ENCODE measurements at regions of chr19 and their contacts with region 1.

Region 1: GRCh38 chr19:14363183-14364097 is 17.8 kb upstream of the ADGRE5 start:
- DNase-seq: peak; percentile 78 to 79
- ATAC-seq: peak; percentile 40 to 67 (median 52)
- H3K4me3 ChIP-seq: peak overlapping the region; percentile 39
- H3K27ac ChIP-seq: peak overlapping the region; percentile 50
- H3K4me1 ChIP-seq: no peaks in the 10 kb centered on the region
- H3K27me3 ChIP-seq: no peaks in the 10 kb centered on the region
- CTCF ChIP-seq: no peak

Region 2: GRCh38 chr19:14318873-14319272 is 44.6 kb before region 1 on chr19:
- intact Hi-C with region 1: no loop called
- DNase-seq: peak in 1 of 2 donors; percentile 51
- ATAC-seq: no peak
- H3K4me3 ChIP-seq: no peak overlapping the region
- H3K27ac ChIP-seq: no peak overlapping the region
- H3K4me1 ChIP-seq: no peaks in the 10 kb centered on the region
- H3K27me3 ChIP-seq: no peaks in the 10 kb centered on the region
- CTCF ChIP-seq: no peak

Region 3: DNA sequence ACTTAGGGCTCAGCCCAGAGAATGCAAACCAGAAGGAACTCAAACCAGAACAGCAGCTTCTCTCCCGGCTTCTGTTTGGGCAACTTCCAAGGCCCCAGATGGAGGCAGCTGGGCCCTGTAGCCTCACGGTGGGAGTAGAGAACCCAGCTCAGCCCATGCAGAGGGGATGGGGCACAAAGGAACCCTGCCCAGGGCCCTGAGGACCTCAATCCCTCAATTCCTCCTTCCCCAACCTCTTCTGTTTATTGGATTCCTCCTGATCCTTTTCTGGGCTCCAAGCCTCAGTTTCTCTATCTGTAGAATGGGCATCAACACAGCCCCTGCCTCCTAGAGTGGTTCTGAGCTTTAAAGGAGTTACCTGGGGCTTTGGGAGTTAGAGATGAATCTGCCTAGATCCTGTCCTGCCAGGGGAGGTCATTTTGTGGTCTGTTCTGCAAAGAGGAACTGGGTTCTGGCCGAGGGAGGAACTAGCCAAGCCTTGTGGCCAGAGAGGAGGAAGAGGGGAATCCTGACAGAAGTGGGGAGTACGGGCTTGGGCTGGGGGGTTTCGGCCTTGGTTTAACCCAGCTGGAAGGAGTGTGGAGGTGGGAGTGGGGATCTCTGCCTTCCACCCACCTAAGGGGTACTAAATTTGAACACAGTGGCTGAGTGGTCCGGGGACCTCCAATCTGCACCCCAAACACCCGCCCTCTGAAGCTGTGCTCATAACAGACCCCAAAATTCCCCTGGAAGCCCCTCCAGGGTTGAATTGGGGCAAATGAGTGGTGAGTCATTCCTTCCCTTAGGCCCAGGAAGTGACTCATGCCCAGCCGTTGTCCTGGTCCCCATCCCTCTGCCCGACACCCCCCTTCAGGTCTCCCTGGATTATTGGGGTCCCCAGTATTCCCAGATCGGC is 20.5 kb after region 1 on chr19:
- intact Hi-C with region 1: no loop called
- DNase-seq: peak in 1 of 2 donors; percentile 68
- ATAC-seq: peak in 3 of 4 donors; percentile 31 to 52 (median 33)
- H3K4me3 ChIP-seq: peak overlapping the region; percentile 85
- H3K27ac ChIP-seq: peak overlapping the region; percentile 95
- H3K4me1 ChIP-seq: peaks cover 33% of the 10 kb centered on the region
- H3K27me3 ChIP-seq: no peaks in the 10 kb centered on the region
- CTCF ChIP-seq: no peak

Region 4: GRCh38 chr19:14395710-14396336 is 32.4 kb after region 1 on chr19:
- intact Hi-C with region 1: no loop called
- DNase-seq: no peak
- ATAC-seq: peak in 1 of 4 donors; percentile 14
- H3K4me3 ChIP-seq: no peak overlapping the region
- H3K27ac ChIP-seq: no peak overlapping the region
- H3K4me1 ChIP-seq: no peaks in the 10 kb centered on the region
- H3K27me3 ChIP-seq: no peaks in the 10 kb centered on the region
- CTCF ChIP-seq: no peak

Region 5: DNA sequence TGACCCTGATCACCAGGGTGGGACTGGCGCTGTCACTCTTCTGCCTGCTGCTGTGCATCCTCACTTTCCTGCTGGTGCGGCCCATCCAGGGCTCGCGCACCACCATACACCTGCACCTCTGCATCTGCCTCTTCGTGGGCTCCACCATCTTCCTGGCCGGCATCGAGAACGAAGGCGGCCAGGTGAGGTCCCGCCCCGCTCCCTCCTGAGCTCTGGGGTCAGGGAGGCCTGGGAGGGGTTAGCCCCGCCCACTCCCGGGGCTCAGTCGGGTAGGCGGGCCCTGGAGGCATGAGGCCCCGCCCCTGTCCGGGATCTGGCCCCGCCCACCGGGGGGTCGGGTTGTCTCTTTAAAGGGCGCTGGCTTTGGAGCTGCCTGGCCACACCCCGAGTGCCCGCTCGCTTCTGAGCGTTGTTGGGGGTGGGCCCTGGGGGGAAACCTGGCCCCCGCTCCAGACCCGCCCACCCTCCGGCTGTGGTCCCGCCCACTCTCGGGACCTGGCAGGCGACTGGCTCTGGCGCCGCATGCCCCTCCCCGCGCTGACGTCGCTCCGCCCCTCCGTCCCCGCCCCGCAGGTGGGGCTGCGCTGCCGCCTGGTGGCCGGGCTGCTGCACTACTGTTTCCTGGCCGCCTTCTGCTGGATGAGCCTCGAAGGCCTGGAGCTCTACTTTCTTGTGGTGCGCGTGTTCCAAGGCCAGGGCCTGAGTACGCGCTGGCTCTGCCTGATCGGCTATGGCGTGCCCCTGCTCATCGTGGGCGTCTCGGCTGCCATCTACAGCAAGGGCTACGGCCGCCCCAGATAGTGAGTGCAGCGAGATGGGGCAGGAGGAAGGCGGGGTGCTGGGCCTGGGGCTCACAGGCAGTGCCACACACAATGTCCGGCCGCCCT is 42.6 kb after region 1 on chr19:
- intact Hi-C with region 1: loop called in 1 of 2 experiments (anchors 5 kb)
- DNase-seq: peak; percentile 88 to 94
- ATAC-seq: peak; percentile 86 to 92 (median 90)
- H3K4me3 ChIP-seq: peak overlapping the region; percentile 52
- H3K27ac ChIP-seq: peak overlapping the region; percentile 66
- H3K4me1 ChIP-seq: peaks cover 6% of the 10 kb centered on the region
- H3K27me3 ChIP-seq: no peaks in the 10 kb centered on the region
- CTCF ChIP-seq: peak; percentile 89